Breast epithelium (tissue), 4 donors: ENCODE measurements at regions of chr6 and their contacts with region 1.

Region 1: GRCh38 chr6:152068622-152069261 is 261.3 kb downstream of the ESR1 start:
- DNase-seq: no peak
- H3K4me3 ChIP-seq: no peak overlapping the region
- H3K27ac ChIP-seq: no peak overlapping the region
- H3K4me1 ChIP-seq: no peaks in the 10 kb centered on the region
- H3K27me3 ChIP-seq: no peaks in the 10 kb centered on the region
- CTCF ChIP-seq: no peak
- POLR2A ChIP-seq: no peak

Region 2: GRCh38 chr6:152261179-152261578 is 192.4 kb after region 1 on chr6:
- intact Hi-C with region 1: loop called (anchors 5 kb)
- DNase-seq: no peak
- H3K4me3 ChIP-seq: no peak overlapping the region
- H3K27ac ChIP-seq: peak overlapping the region in 1 of 2 donors; percentile 4
- H3K4me1 ChIP-seq: no peaks in the 10 kb centered on the region
- H3K27me3 ChIP-seq: no peaks in the 10 kb centered on the region
- CTCF ChIP-seq: no peak
- POLR2A ChIP-seq: no peak

Region 3: DNA sequence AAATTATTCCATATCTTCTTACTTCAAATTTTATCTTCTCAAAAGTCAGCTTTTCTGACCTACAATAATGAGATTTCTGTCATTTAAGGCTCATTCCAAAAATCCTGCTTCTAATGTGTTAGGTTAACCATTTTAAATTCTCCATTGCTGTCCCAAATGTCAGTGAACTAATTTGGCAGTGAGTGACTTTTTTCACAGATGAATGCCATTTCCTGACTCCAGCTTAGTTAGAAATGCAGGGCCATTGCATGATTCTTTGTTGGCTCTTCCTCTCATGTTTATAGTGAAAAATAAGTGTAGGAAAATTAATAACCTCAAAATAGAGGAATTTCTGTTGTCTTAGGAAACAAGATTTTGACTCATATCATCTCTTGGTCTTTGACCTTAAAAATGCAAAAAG is 726.0 kb after region 1 on chr6:
- intact Hi-C with region 1: no loop called
- DNase-seq: no peak
- H3K4me3 ChIP-seq: no peak overlapping the region
- H3K27ac ChIP-seq: no peak overlapping the region
- H3K4me1 ChIP-seq: no peaks in the 10 kb centered on the region
- H3K27me3 ChIP-seq: no peaks in the 10 kb centered on the region
- CTCF ChIP-seq: no peak
- POLR2A ChIP-seq: no peak